ENCODE measurements at regions of chr21 and their contacts with region 1.

Region 1: DNA sequence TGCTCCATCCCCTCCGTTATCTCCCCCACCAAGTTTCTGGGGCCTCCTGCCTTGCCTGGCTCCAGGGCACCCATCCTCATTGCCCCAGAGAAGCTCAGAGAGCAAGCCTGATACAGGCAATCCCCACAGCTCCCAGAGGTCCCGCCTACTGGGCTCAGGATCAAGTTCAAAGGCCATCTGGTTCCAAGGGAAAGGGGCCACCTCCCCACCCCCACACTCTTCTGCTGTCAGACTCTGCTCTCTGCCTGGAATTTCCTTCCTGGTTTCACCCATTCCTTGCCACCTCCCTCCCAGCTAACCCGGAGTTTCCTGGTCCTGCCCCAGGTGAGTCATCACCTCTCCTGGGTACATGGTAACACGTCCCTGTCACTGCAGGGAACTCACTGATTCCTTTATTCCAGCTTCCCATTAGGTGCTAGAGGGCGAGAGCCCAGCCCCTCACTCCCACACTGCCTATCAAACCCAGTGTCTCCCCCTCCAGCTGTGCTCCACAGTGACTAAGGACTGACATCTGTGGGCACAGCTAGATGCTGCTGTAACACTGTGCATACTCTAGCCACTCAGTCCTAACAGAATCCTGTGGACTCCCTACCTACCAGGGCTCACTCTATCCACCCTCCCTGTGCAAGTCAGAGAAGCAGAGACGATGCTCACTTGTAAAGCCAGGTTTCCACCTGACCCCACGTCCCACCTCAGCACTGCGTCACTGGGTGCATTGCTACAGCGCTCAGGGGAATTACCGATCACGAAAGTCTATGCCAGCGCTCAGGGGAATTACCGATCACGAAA is 21.8 kb downstream of the RSPH1 start:
- DNase-seq: no peak
- ATAC-seq: peak; percentile 83
- H3K4me3 ChIP-seq: no peak overlapping the region
- H3K27ac ChIP-seq: peak overlapping the region; percentile 20; the same call in 1 of the 2 replicates
- H3K4me1 ChIP-seq: peaks cover 53% of the 10 kb centered on the region
- H3K27me3 ChIP-seq: no peaks in the 10 kb centered on the region
- CTCF ChIP-seq: no peak; a peak in 1 of 6 replicates
- EP300 ChIP-seq: peak; percentile 21 to 71; a peak in 1 of 4 replicates
- POLR2A ChIP-seq: no peak
- RAD21 ChIP-seq: no peak; the same call in 1 of the 2 replicates

Region 2: GRCh38 chr21:42460391-42461204 is 13.6 kb before region 1 on chr21:
- CTCF ChIA-PET with region 1: interaction called, 28 read pairs
- POLR2A ChIA-PET with region 1: interaction called, 6 read pairs
- RAD21 ChIA-PET with region 1: interaction called, 57 read pairs
- SMC1A ChIA-PET with region 1: interaction called, 35 read pairs
- in situ Hi-C with region 1: no loop called
- intact Hi-C with region 1: no loop called
- DNase-seq: peak; percentile 83
- ATAC-seq: peak; percentile 71
- H3K4me3 ChIP-seq: no peak overlapping the region
- H3K27ac ChIP-seq: peak overlapping the region; percentile 60
- H3K4me1 ChIP-seq: peaks cover 52% of the 10 kb centered on the region
- H3K27me3 ChIP-seq: no peaks in the 10 kb centered on the region
- CTCF ChIP-seq: no peak
- EP300 ChIP-seq: peak; percentile 59 to 97; a peak in 3 of 4 replicates
- POLR2A ChIP-seq: no peak
- RAD21 ChIP-seq: no peak

Region 3: GRCh38 chr21:42486531-42486930 is 12.3 kb after region 1 on chr21:
- CTCF ChIA-PET with region 1: interaction called, 3 read pairs
- POLR2A ChIA-PET with region 1: no interaction called
- RAD21 ChIA-PET with region 1: interaction called, 5 read pairs
- SMC1A ChIA-PET with region 1: interaction called, 15 read pairs
- in situ Hi-C with region 1: no loop called
- intact Hi-C with region 1: no loop called
- DNase-seq: no peak
- ATAC-seq: no peak
- H3K4me3 ChIP-seq: no peak overlapping the region
- H3K27ac ChIP-seq: no peak overlapping the region
- H3K4me1 ChIP-seq: peaks cover 5% of the 10 kb centered on the region; the same call in 1 of the 2 replicates
- H3K27me3 ChIP-seq: no peaks in the 10 kb centered on the region; a peak in 1 of 4 replicates
- CTCF ChIP-seq: no peak
- EP300 ChIP-seq: no peak
- POLR2A ChIP-seq: no peak
- RAD21 ChIP-seq: no peak

Region 4: GRCh38 chr21:42496122-42496900 is 22.1 kb after region 1 on chr21 and contains the start of gene RSPH1:
- CTCF ChIA-PET with region 1: interaction called, 3 read pairs
- POLR2A ChIA-PET with region 1: interaction called, 9 read pairs
- RAD21 ChIA-PET with region 1: interaction called, 4 read pairs
- SMC1A ChIA-PET with region 1: interaction called, 7 read pairs
- in situ Hi-C with region 1: no loop called
- intact Hi-C with region 1: loop called (anchors 2 kb)
- DNase-seq: peak; percentile 96
- ATAC-seq: peak; percentile 99
- H3K4me3 ChIP-seq: peak within 1 kb of the TSS; percentile 80
- H3K27ac ChIP-seq: peak within 1 kb of the TSS; percentile 41
- H3K4me1 ChIP-seq: peaks cover 13% of the 10 kb centered on the region
- H3K27me3 ChIP-seq: no peaks in the 10 kb centered on the region
- CTCF ChIP-seq: no peak; a peak in 1 of 6 replicates
- EP300 ChIP-seq: no peak
- POLR2A ChIP-seq: peak; percentile 69
- RAD21 ChIP-seq: no peak
- polyA plus RNA-seq, gene RSPH1: 0.37 to 0.38 TPM

Region 5: DNA sequence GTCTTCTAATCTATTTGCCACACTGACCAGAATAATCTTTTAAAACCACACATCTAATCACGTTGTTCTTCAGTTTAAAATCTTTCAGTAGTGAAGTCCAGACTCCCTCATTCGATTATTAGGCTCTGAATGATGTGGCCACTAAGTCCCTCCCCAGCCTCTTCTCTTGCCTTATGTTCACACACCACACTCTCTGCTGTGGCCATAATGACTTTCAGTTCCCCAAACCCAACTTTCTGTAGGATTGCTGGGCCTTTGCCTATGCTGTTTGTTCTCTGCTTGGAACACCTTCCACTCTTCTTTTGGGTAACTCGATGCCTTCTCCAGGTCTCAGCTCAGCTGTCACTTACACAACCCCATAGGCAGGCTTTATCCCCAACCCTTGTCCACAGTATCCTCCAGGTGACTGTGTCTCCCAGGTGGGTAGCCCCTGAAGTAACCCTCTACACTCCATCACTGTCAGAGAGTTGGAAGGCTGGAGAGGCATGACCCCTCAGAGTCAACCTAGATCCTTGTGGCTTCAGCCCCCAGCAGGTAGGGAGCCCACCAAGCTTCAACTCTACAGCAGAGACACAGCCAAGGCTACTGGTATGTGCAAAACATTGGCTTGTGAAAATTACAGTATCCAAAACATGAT is 31.0 kb after region 1 on chr21:
- CTCF ChIA-PET with region 1: no interaction called
- POLR2A ChIA-PET with region 1: interaction called, 9 read pairs
- RAD21 ChIA-PET with region 1: interaction called, 5 read pairs
- SMC1A ChIA-PET with region 1: interaction called, 44 read pairs
- in situ Hi-C with region 1: no loop called
- intact Hi-C with region 1: no loop called
- DNase-seq: peak; percentile 72
- ATAC-seq: peak; percentile 99
- H3K4me3 ChIP-seq: no peak overlapping the region
- H3K27ac ChIP-seq: no peak overlapping the region
- H3K4me1 ChIP-seq: peaks cover 31% of the 10 kb centered on the region
- H3K27me3 ChIP-seq: no peaks in the 10 kb centered on the region
- CTCF ChIP-seq: no peak
- EP300 ChIP-seq: peak; percentile 58 to 88; a peak in 2 of 4 replicates
- POLR2A ChIP-seq: no peak
- RAD21 ChIP-seq: no peak

Measured in GM12878 (cell line).